CD8-positive, alpha-beta T cell (primary cell): ENCODE measurements at regions of chr12 and their contacts with region 1.

Region 1: GRCh38 chr12:49018261-49019119 is at the start of gene PRKAG1:
- DNase-seq: peak; percentile 95 to 99 (median 96)
- ATAC-seq: peak; percentile 90
- H3K4me3 ChIP-seq: peak within 1 kb of the TSS; percentile 82 to 85
- H3K4me3 Mint-ChIP-seq: peak within 1 kb of the TSS; percentile 95
- H3K27ac ChIP-seq: peak within 1 kb of the TSS; percentile 97 to 98
- H3K27ac Mint-ChIP-seq: peak within 1 kb of the TSS; percentile 99
- H3K4me1 ChIP-seq: peaks cover 25% of the 10 kb centered on the region
- H3K4me1 Mint-ChIP-seq: peaks cover 38% of the 10 kb centered on the region
- H3K27me3 ChIP-seq: no peaks in the 10 kb centered on the region
- H3K27me3 Mint-ChIP-seq: no peaks in the 10 kb centered on the region
- CTCF ChIP-seq: peak; percentile 61
- total RNA-seq, gene PRKAG1: 30.2 to 34.3 TPM

Region 2: DNA sequence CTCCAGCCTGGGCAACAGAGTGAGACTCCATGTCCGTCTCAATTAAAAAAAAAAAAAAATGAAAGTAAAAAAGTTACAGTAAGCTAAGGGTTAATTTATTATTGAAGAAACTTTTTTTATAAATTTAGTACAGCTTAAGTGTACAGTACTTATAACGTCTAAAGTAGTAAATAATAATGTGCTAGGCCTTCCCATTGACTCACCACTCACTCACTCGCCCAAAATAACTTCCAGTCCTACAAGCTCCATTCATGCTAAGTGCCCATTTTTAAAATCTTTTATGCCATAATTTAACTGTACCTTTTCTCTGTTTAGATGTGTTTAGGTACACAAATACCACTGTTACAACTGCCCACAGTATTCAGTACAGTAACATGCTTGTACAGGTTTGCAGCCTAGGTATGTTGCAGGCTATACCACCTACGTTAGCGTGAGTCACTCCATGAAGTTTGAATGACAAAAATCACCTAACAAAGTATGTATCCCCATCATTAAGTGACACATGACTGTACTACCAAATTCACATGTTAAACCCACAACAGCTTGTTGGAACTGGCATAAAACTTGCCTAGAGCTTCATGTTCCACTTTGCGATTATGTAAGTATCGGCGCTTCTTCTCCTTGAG is 347.1 kb before region 1 on chr12:
- CTCF ChIA-PET with region 1: no interaction called
- POLR2A ChIA-PET with region 1: no interaction called
- intact Hi-C with region 1: no loop called
- DNase-seq: no peak
- ATAC-seq: no peak
- H3K4me3 ChIP-seq: no peak overlapping the region
- H3K4me3 Mint-ChIP-seq: no peak overlapping the region
- H3K27ac ChIP-seq: no peak overlapping the region
- H3K27ac Mint-ChIP-seq: no peak overlapping the region
- H3K4me1 ChIP-seq: peaks cover 4% of the 10 kb centered on the region
- H3K4me1 Mint-ChIP-seq: peaks cover 21% of the 10 kb centered on the region
- H3K27me3 ChIP-seq: no peaks in the 10 kb centered on the region
- H3K27me3 Mint-ChIP-seq: no peaks in the 10 kb centered on the region
- CTCF ChIP-seq: no peak

Region 3: GRCh38 chr12:48681738-48682532 is 336.6 kb before region 1 on chr12 and contains the start of gene KANSL2:
- CTCF ChIA-PET with region 1: no interaction called
- POLR2A ChIA-PET with region 1: no interaction called
- intact Hi-C with region 1: loop called in 1 of 2 experiments (anchors 5 kb)
- DNase-seq: peak; percentile 93 to 99 (median 96)
- ATAC-seq: peak; percentile 94
- H3K4me3 ChIP-seq: peak within 1 kb of the TSS; percentile 66 to 91
- H3K4me3 Mint-ChIP-seq: peak within 1 kb of the TSS; percentile 95
- H3K27ac ChIP-seq: peak within 1 kb of the TSS; percentile 80 to 90
- H3K27ac Mint-ChIP-seq: peak within 1 kb of the TSS; percentile 98
- H3K4me1 ChIP-seq: peaks cover 45% of the 10 kb centered on the region
- H3K4me1 Mint-ChIP-seq: peaks cover 49% of the 10 kb centered on the region
- H3K27me3 ChIP-seq: no peaks in the 10 kb centered on the region
- H3K27me3 Mint-ChIP-seq: no peaks in the 10 kb centered on the region
- CTCF ChIP-seq: no peak
- total RNA-seq, gene KANSL2: 175 to 179 TPM

Region 4: GRCh38 chr12:48957141-48958048 is 61.1 kb before region 1 on chr12 and contains the start of gene ARF3:
- CTCF ChIA-PET with region 1: no interaction called
- POLR2A ChIA-PET with region 1: no interaction called
- intact Hi-C with region 1: loop called (anchors 1 kb)
- DNase-seq: peak; percentile 79 to 97 (median 92)
- ATAC-seq: peak; percentile 94
- H3K4me3 ChIP-seq: peak within 1 kb of the TSS; percentile 68 to 97
- H3K4me3 Mint-ChIP-seq: peak within 1 kb of the TSS; percentile 97
- H3K27ac ChIP-seq: peak within 1 kb of the TSS; percentile 50 to 71
- H3K27ac Mint-ChIP-seq: peak within 1 kb of the TSS; percentile 86
- H3K4me1 ChIP-seq: peaks cover 19% of the 10 kb centered on the region
- H3K4me1 Mint-ChIP-seq: peaks cover 42% of the 10 kb centered on the region
- H3K27me3 ChIP-seq: no peaks in the 10 kb centered on the region
- H3K27me3 Mint-ChIP-seq: peaks cover 8% of the 10 kb centered on the region
- CTCF ChIP-seq: no peak
- total RNA-seq, gene ARF3: 34.7 to 36.4 TPM

Region 5: DNA sequence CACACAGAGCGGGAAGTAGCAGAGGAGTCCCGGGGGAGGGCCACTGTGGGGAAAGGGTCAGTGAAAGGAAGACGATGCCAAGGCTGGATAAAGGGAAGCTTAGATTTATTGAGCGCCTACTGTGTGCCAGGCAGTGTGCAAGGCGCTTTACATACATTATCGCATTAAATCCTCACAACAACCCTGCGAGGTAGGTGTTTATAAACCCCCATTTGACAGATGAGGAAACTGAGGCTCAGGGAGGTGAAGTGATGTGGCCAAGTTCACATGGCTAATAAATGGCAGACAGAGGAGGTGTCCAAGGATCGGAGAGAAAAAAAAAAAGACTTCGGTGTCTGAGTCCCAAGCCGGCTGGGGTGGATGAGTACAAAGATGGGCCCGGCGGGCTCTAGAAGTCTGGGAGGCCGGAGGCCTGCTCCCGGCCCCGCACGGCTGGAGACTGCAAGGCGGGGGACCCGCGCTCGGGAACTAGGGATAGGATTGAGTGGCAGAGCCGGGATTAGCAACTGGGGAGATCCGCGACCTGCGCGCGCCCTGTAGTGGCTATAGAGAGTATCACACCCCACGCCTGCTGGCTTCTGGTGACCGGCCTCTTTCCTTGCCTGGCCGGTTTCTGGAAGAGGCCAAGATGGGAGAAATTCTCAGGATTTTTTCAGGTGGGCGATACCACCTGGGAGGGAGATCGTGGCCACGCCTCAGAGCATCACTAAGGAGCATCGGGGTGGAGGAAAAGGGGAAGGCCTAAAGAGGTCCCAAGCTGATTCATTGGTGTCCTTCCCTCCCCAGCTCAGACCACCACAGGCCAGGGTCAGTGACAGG is 23.2 kb before region 1 on chr12:
- CTCF ChIA-PET with region 1: interaction called, 12 read pairs
- POLR2A ChIA-PET with region 1: interaction called, 3 read pairs
- intact Hi-C with region 1: loop called (anchors 1 kb)
- DNase-seq: peak in 6 of 9 experiments; percentile 53 to 70 (median 63)
- ATAC-seq: no peak
- H3K4me3 ChIP-seq: no peak overlapping the region
- H3K4me3 Mint-ChIP-seq: peak overlapping the region; percentile 49
- H3K27ac ChIP-seq: no peak overlapping the region
- H3K27ac Mint-ChIP-seq: no peak overlapping the region
- H3K4me1 ChIP-seq: peaks cover 39% of the 10 kb centered on the region
- H3K4me1 Mint-ChIP-seq: peaks cover 32% of the 10 kb centered on the region
- H3K27me3 ChIP-seq: peaks cover 32 to 41% of the 10 kb centered on the region in 2 experiments
- H3K27me3 Mint-ChIP-seq: peaks cover 53% of the 10 kb centered on the region
- CTCF ChIP-seq: peak; percentile 79

Region 6: GRCh38 chr12:49060237-49061156 is 42.0 kb after region 1 on chr12 and contains the start of gene KMT2D:
- CTCF ChIA-PET with region 1: interaction called, 7 read pairs
- POLR2A ChIA-PET with region 1: interaction called, 3 read pairs
- intact Hi-C with region 1: loop called (anchors 1 kb)
- DNase-seq: peak; percentile 72 to 96 (median 87)
- ATAC-seq: peak; percentile 71
- H3K4me3 ChIP-seq: peak within 1 kb of the TSS; percentile 97 to 100
- H3K4me3 Mint-ChIP-seq: peak within 1 kb of the TSS; percentile 98
- H3K27ac ChIP-seq: peak within 1 kb of the TSS; percentile 87 to 97
- H3K27ac Mint-ChIP-seq: peak within 1 kb of the TSS; percentile 98
- H3K4me1 ChIP-seq: peaks cover 45% of the 10 kb centered on the region
- H3K4me1 Mint-ChIP-seq: peaks cover 52% of the 10 kb centered on the region
- H3K27me3 ChIP-seq: no peaks in the 10 kb centered on the region
- H3K27me3 Mint-ChIP-seq: no peaks in the 10 kb centered on the region
- CTCF ChIP-seq: no peak
- total RNA-seq, gene KMT2D: 112 to 127 TPM

Region 7: GRCh38 chr12:49130151-49131050 is 111.9 kb after region 1 on chr12:
- CTCF ChIA-PET with region 1: no interaction called
- POLR2A ChIA-PET with region 1: no interaction called
- intact Hi-C with region 1: loop called in 1 of 2 experiments (anchors 1 kb)
- DNase-seq: peak; percentile 78 to 97 (median 92)
- ATAC-seq: peak; percentile 67
- H3K4me3 ChIP-seq: peak overlapping the region; percentile 88 to 91
- H3K4me3 Mint-ChIP-seq: peak overlapping the region; percentile 96
- H3K27ac ChIP-seq: peak overlapping the region; percentile 90 to 96
- H3K27ac Mint-ChIP-seq: peak overlapping the region; percentile 99
- H3K4me1 ChIP-seq: peaks cover 25% of the 10 kb centered on the region
- H3K4me1 Mint-ChIP-seq: peaks cover 47% of the 10 kb centered on the region
- H3K27me3 ChIP-seq: no peaks in the 10 kb centered on the region
- H3K27me3 Mint-ChIP-seq: no peaks in the 10 kb centered on the region
- CTCF ChIP-seq: peak; percentile 96

Region 8: DNA sequence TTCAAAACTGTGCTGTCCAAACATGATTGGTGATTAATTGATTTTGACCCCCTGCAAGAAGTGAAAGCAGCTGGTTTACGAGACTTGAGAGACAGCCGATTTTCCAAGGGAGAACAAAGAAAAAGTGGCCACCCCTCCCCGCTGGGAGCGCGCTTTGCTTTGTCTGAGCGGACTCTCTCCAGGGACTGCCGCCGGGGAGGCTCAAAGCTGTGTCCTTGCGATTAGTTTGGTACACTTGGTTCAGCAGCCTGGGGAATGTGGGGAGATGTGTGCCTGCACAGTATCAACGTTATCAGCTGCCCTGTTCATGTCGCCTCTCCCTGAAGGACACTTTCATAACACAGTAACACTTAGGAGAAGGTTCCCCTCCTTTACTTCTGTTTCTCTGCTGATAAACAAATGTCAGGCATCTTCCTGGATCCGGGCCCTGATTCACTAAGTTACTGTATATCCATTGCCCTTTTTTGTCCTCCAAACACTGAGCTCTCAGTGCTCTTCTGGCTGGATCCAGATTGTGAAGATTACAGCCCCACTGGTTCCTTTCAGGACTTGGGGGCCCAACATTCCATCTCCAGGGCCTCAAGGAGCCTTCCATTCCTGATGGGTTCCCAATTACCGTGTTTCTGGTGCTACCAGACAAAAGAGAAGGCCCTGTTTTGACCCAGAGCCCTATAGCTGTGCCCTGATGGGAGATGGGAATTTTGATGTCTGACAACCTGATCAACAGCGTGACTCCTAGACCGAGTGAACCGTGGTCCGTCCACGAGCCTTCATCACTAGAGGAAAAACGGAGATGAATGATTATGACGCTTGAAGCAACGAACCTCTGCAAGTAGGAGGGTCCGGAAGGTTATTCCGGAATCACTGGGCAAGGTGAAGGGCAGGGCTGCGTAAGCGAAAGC is 214.7 kb after region 1 on chr12:
- CTCF ChIA-PET with region 1: interaction called, 3 read pairs
- POLR2A ChIA-PET with region 1: no interaction called
- intact Hi-C with region 1: loop called in 1 of 2 experiments (anchors 1 kb)
- DNase-seq: peak in 1 of 9 experiments; percentile 13
- ATAC-seq: no peak
- H3K4me3 ChIP-seq: no peak overlapping the region
- H3K4me3 Mint-ChIP-seq: peak overlapping the region; percentile 69
- H3K27ac ChIP-seq: no peak overlapping the region
- H3K27ac Mint-ChIP-seq: no peak overlapping the region
- H3K4me1 ChIP-seq: peaks cover 8% of the 10 kb centered on the region
- H3K4me1 Mint-ChIP-seq: peaks cover 10% of the 10 kb centered on the region
- H3K27me3 ChIP-seq: no peaks in the 10 kb centered on the region
- H3K27me3 Mint-ChIP-seq: no peaks in the 10 kb centered on the region
- CTCF ChIP-seq: no peak